ENCODE measurements at regions of chr14 and their contacts with region 1.

Region 1: GRCh38 chr14:49767562-49768300 is at the start of gene KLHDC2:
- DNase-seq: peak; percentile 87 to 90 (median 89)
- H3K4me3 ChIP-seq: peak within 1 kb of the TSS; percentile 81 to 97
- H3K4me3 Mint-ChIP-seq: peak within 1 kb of the TSS; percentile 94 to 99 (median 98)
- H3K27ac ChIP-seq: peak within 1 kb of the TSS; percentile 95
- H3K27ac Mint-ChIP-seq: peak within 1 kb of the TSS; percentile 99 to 100 (median 99)
- H3K4me1 ChIP-seq: peaks cover 30% of the 10 kb centered on the region
- H3K4me1 Mint-ChIP-seq: peaks cover 19 to 45% (median 28%) of the 10 kb centered on the region in 4 donors
- H3K27me3 ChIP-seq: no peaks in the 10 kb centered on the region
- H3K27me3 Mint-ChIP-seq: peaks cover 0 to 1% of the 10 kb centered on the region in 2 donors
- total RNA-seq, gene KLHDC2: 84.0 to 86.4 TPM

Region 2: DNA sequence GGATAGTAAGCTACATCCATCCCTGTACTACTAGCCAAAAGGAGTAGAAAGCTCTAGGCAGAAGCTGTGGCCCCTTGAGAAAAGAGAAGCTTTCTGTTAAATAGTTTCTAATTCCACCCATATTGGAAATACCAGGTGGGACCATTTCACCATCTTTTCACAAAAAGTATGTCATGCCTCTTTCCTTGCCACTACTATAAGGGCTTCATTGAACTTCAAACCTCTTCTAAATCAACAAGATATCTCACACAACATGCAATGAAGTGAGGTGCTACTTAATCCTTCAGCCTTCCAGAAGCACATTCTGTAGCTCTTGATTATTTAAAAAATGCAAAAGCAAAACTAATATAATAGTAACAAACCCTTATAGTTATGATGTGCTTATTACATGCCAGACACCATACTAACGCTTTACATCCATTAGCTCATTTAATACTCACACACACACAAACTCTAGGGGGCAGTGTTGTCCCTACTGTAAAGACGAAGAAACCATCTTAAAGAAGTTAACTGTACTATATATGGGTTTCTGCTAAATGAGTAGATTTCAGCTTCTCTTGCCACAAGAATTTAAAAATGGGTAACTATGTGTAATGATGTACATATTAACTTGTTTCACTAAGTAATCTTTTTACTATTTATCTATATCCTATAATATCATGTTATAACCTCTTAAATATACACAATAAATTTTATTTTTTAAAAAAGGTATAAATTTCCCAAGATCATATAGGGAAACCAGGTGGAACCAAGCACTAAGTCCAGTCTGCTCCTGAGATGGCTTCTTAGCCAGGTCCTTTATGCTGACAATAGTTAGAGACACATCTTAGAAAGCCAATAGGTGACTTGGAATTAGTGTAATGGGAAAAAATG is 306.0 kb before region 1 on chr14:
- CTCF ChIA-PET with region 1: interaction called, 8 read pairs
- POLR2A ChIA-PET with region 1: interaction called, 3 read pairs
- intact Hi-C with region 1: loop called (anchors 5 kb)
- DNase-seq: peak; percentile 63 to 68 (median 67)
- H3K4me3 ChIP-seq: no peak overlapping the region
- H3K4me3 Mint-ChIP-seq: no peak overlapping the region
- H3K27ac ChIP-seq: no peak overlapping the region
- H3K27ac Mint-ChIP-seq: no peak overlapping the region
- H3K4me1 ChIP-seq: no peaks in the 10 kb centered on the region
- H3K4me1 Mint-ChIP-seq: no peaks in the 10 kb centered on the region
- H3K27me3 ChIP-seq: no peaks in the 10 kb centered on the region
- H3K27me3 Mint-ChIP-seq: peaks cover 2 to 3% of the 10 kb centered on the region in 2 donors

Region 3: DNA sequence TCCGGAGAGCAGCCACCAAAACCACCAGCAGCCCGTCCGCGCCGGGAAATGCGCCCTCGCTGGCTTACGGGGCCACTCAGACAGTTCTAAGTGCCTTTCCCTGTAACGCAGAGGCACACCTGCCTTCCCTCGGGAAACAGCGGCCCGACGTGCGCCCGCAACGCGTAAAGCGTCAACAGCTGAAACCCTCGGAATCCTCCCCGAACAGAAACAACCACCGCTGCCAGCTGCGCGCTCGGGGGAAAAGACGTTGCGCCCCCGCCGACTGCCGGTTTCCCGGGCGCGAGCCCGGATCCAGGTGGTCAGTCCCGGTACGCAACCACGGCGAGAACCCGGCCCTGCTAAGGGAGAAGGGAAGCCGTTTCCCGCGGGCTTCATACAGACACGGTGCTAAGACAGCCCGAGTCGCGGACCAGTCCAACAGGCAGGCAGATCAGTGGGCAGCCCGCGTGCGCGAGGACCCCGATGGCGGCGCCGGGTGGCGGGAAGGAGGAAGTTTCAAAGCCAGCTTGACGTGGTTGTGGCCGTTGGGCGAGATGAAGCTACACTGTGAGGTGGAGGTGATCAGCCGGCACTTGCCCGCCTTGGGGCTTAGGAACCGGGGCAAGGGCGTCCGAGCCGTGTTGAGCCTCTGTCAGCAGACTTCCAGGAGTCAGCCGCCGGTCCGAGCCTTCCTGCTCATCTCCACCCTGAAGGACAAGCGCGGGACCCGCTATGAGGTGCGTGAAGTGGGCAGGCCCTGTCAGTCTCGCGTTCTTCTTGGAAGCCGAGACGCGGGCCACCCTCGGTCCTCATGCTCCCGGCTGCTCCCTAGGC is 169.0 kb before region 1 on chr14 and contains the start of gene LRR1:
- CTCF ChIA-PET with region 1: no interaction called
- POLR2A ChIA-PET with region 1: interaction called, 16 read pairs
- intact Hi-C with region 1: loop called (anchors 1 kb)
- DNase-seq: peak; percentile 84 to 93 (median 87)
- H3K4me3 ChIP-seq: peak within 1 kb of the TSS; percentile 70 to 97
- H3K4me3 Mint-ChIP-seq: peak within 1 kb of the TSS; percentile 92 to 100 (median 98)
- H3K27ac ChIP-seq: peak within 1 kb of the TSS; percentile 90
- H3K27ac Mint-ChIP-seq: peak within 1 kb of the TSS; percentile 93 to 99 (median 98)
- H3K4me1 ChIP-seq: peaks cover 9% of the 10 kb centered on the region
- H3K4me1 Mint-ChIP-seq: peaks cover 9 to 38% (median 25%) of the 10 kb centered on the region in 4 donors
- H3K27me3 ChIP-seq: no peaks in the 10 kb centered on the region
- H3K27me3 Mint-ChIP-seq: no peaks in the 10 kb centered on the region
- total RNA-seq, gene LRR1: 13.6 to 16.1 TPM

Region 4: GRCh38 chr14:49633640-49634546 is 133.8 kb before region 1 on chr14:
- CTCF ChIA-PET with region 1: interaction called, 52 read pairs
- POLR2A ChIA-PET with region 1: interaction called, 153 read pairs
- intact Hi-C with region 1: loop called (anchors 1 kb)
- DNase-seq: peak; percentile 92 to 95 (median 94)
- H3K4me3 ChIP-seq: peak overlapping the region; percentile 90 to 99
- H3K4me3 Mint-ChIP-seq: peak overlapping the region; percentile 95 to 100 (median 97)
- H3K27ac ChIP-seq: peak overlapping the region; percentile 99
- H3K27ac Mint-ChIP-seq: peak overlapping the region; percentile 92 to 100 (median 96)
- H3K4me1 ChIP-seq: peaks cover 48% of the 10 kb centered on the region
- H3K4me1 Mint-ChIP-seq: peaks cover 26 to 75% (median 43%) of the 10 kb centered on the region in 4 donors
- H3K27me3 ChIP-seq: no peaks in the 10 kb centered on the region
- H3K27me3 Mint-ChIP-seq: peaks cover 0 to 1% of the 10 kb centered on the region in 2 donors

Region 5: DNA sequence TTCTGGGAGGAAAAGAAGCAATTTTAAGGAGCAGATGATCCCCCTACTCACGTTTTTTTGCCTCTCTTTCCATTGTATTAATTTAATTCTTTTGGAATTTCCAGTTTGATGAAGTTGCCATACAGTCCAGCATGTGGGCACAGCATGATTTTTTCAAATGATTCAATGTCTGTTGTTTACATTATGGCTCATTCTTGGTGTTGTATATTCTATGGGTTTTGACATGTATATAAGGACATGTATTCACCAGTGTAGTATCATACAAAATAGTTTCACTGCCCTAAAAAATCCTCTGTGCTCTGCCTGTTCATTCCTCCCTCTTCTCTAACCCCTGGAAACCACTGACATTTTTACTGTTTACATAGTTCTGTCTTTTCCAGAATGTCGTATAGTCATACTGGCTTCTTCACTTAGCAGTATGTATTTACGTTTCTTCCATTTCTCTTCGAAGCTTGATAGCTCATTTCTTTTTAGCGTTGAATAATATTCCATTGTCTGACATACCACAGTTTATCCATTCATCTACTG is 13.1 kb before region 1 on chr14:
- CTCF ChIA-PET with region 1: no interaction called
- POLR2A ChIA-PET with region 1: no interaction called
- intact Hi-C with region 1: no loop called
- DNase-seq: no peak
- H3K4me3 ChIP-seq: no peak overlapping the region
- H3K4me3 Mint-ChIP-seq: no peak overlapping the region
- H3K27ac ChIP-seq: no peak overlapping the region
- H3K27ac Mint-ChIP-seq: no peak overlapping the region
- H3K4me1 ChIP-seq: no peaks in the 10 kb centered on the region
- H3K4me1 Mint-ChIP-seq: peaks cover 0 to 1% (median 0%) of the 10 kb centered on the region in 4 donors
- H3K27me3 ChIP-seq: no peaks in the 10 kb centered on the region
- H3K27me3 Mint-ChIP-seq: no peaks in the 10 kb centered on the region

Region 6: GRCh38 chr14:49783394-49784010 is 15.8 kb after region 1 on chr14:
- CTCF ChIA-PET with region 1: interaction called, 5 read pairs
- POLR2A ChIA-PET with region 1: interaction called, 47 read pairs
- intact Hi-C with region 1: loop called (anchors 2 kb)
- DNase-seq: no peak
- H3K4me3 ChIP-seq: no peak overlapping the region
- H3K4me3 Mint-ChIP-seq: no peak overlapping the region
- H3K27ac ChIP-seq: no peak overlapping the region
- H3K27ac Mint-ChIP-seq: peak overlapping the region in 1 of 7 donors; percentile 13
- H3K4me1 ChIP-seq: no peaks in the 10 kb centered on the region
- H3K4me1 Mint-ChIP-seq: peaks cover 0 to 4% (median 0%) of the 10 kb centered on the region in 4 donors
- H3K27me3 ChIP-seq: no peaks in the 10 kb centered on the region
- H3K27me3 Mint-ChIP-seq: no peaks in the 10 kb centered on the region

Region 7: GRCh38 chr14:49820176-49820575 is 52.4 kb after region 1 on chr14:
- CTCF ChIA-PET with region 1: no interaction called
- POLR2A ChIA-PET with region 1: no interaction called
- intact Hi-C with region 1: no loop called
- DNase-seq: no peak
- H3K4me3 ChIP-seq: no peak overlapping the region
- H3K4me3 Mint-ChIP-seq: no peak overlapping the region
- H3K27ac ChIP-seq: no peak overlapping the region
- H3K27ac Mint-ChIP-seq: no peak overlapping the region
- H3K4me1 ChIP-seq: no peaks in the 10 kb centered on the region
- H3K4me1 Mint-ChIP-seq: peaks cover 0 to 7% (median under 1%) of the 10 kb centered on the region in 4 donors
- H3K27me3 ChIP-seq: no peaks in the 10 kb centered on the region
- H3K27me3 Mint-ChIP-seq: no peaks in the 10 kb centered on the region

Region 8: DNA sequence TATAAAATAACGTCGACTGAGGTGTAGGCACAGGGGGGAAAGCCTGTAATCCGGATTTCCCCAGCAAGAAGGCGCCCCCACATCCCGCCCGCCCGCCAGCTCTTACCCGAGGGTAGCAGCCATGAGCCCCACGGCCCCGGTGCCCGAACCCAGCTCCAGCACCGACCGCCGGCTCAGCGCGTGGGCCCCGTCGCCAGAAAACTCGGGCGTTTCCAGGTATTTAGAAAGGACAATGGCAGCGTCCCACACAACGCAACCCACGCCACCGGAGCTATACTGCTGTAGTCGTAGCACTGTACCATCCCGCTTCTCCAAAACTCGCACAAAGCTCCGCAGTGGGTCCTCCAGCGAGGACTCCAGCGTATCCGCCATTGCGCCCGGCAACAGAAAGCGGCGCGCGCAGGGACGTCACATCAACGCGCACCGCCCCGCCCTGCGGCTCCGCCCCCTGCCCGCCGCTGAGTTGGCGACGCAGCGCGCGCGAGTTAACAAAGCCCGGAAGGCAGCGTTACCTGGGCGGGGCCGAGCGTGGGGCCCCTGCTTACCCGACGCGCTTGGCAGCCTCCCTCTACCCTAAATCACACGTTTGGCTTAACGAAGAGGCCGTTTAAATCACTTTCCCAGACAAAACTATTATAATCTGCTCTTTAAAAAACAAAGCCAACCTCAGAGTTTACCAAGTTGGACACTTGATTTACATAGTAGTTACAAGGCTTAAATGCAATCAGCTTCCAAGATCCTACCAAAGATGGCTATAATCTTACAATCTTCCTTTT is 348.6 kb after region 1 on chr14 and contains the start of gene VCPKMT:
- CTCF ChIA-PET with region 1: interaction called, 4 read pairs
- POLR2A ChIA-PET with region 1: interaction called, 16 read pairs
- intact Hi-C with region 1: loop called (anchors 2 kb)
- DNase-seq: peak; percentile 93 to 96 (median 95)
- H3K4me3 ChIP-seq: peak within 1 kb of the TSS; percentile 65 to 69
- H3K4me3 Mint-ChIP-seq: peak within 1 kb of the TSS; percentile 97 to 98 (median 98)
- H3K27ac ChIP-seq: peak within 1 kb of the TSS; percentile 93
- H3K27ac Mint-ChIP-seq: peak within 1 kb of the TSS; percentile 96 to 100 (median 99)
- H3K4me1 ChIP-seq: peaks cover 34% of the 10 kb centered on the region
- H3K4me1 Mint-ChIP-seq: peaks cover 10 to 32% (median 23%) of the 10 kb centered on the region in 4 donors
- H3K27me3 ChIP-seq: no peaks in the 10 kb centered on the region
- H3K27me3 Mint-ChIP-seq: no peaks in the 10 kb centered on the region
- total RNA-seq, gene VCPKMT: 17.3 to 20.1 TPM

Region 9: GRCh38 chr14:50156111-50156510 is 388.4 kb after region 1 on chr14:
- CTCF ChIA-PET with region 1: no interaction called
- POLR2A ChIA-PET with region 1: no interaction called
- intact Hi-C with region 1: no loop called
- DNase-seq: no peak
- H3K4me3 ChIP-seq: no peak overlapping the region
- H3K4me3 Mint-ChIP-seq: no peak overlapping the region
- H3K27ac ChIP-seq: no peak overlapping the region
- H3K27ac Mint-ChIP-seq: no peak overlapping the region
- H3K4me1 ChIP-seq: no peaks in the 10 kb centered on the region
- H3K4me1 Mint-ChIP-seq: peaks cover 0 to 2% (median 0%) of the 10 kb centered on the region in 4 donors
- H3K27me3 ChIP-seq: no peaks in the 10 kb centered on the region
- H3K27me3 Mint-ChIP-seq: no peaks in the 10 kb centered on the region

Region 10: DNA sequence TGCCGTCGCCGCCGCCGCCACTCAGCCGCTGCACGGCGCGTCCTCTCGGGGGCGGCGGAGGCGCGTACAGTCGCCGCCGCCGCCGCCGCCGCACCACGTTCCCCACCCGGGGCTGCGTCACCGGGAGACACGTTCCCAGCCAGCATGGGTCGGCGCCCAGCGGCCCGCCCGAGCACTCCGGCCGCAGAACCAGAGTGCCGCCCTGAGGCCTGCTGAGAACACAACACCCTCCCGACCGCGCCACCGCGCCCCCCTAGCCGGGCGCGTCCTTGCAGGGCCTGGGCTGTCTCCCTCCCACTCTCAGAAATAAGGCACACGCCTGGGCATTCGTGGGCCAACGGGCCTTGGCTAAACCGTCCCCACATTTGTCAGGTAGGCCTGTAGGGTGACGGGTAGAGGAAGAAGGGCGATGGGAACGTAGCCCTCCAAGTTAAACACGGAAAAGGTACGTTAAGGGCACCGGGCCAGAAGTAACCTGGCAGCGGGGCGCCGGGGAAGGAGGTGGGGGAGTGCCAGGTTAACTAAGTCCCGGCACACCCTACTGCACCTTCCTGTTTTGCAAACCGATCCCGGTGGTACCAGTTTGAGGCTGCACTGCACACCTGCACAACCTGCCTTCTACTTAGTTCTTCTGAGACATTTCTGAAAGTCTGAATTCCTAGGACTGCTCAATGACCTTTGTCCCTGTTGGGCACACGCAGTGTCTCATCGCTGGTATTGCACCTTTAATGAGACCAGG is 764.9 kb after region 1 on chr14 and contains the start of gene MAP4K5:
- CTCF ChIA-PET with region 1: no interaction called
- POLR2A ChIA-PET with region 1: no interaction called
- intact Hi-C with region 1: loop called (anchors 1 kb)
- DNase-seq: peak; percentile 85 to 89 (median 88)
- H3K4me3 ChIP-seq: peak within 1 kb of the TSS; percentile 26 to 68
- H3K4me3 Mint-ChIP-seq: peak within 1 kb of the TSS; percentile 88 to 94 (median 93)
- H3K27ac ChIP-seq: peak within 1 kb of the TSS; percentile 69
- H3K27ac Mint-ChIP-seq: peak within 1 kb of the TSS; percentile 85 to 95 (median 91)
- H3K4me1 ChIP-seq: peaks cover 46% of the 10 kb centered on the region
- H3K4me1 Mint-ChIP-seq: peaks cover 33 to 50% (median 43%) of the 10 kb centered on the region in 4 donors
- H3K27me3 ChIP-seq: no peaks in the 10 kb centered on the region
- H3K27me3 Mint-ChIP-seq: no peaks in the 10 kb centered on the region
- total RNA-seq, gene MAP4K5: 42.6 to 43.0 TPM

Measured in CD4-positive, alpha-beta memory T cell (primary cell).